HepG2 (cell line): ENCODE measurements at regions of chr20 and their contacts with region 1.

Region 1: DNA sequence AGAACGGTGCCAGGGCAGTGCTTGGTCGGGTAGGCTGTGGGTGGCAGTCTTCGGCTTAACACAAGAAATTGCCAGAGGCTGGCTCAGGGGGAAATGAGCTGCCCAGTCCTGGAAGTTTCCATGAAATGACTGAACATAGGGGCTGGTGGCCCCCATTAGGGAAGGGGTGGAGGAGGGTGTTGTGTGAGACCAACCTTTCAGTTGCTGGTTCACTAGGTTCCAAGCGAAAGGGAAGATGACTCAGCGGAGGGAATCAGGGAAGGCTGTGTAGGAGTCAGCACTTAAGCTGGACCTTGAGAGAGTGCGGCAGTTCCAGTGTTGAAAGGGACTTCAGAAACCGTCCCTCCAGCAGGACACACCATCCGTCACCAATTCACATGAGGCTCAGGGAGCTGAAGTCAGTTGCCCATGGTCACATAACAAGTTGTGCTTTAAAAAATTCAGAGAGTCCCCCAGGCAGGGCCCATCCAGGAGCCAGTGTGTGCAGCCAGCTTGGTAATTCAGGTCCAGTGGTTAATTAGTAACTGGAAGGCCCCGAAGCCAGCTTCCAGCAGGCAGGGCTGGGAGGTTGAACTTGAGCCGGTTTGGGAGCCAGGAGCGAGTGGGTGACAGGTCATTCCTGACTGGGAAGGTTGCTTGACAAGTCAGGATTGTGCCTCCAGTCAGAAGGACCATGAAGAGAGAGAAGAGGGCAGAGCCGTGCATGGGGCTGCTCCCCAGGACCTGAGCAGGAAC is at the start of gene SGK2:
- DNase-seq: peak; percentile 96
- ATAC-seq: peak; percentile 85
- H3K4me3 ChIP-seq: peak within 1 kb of the TSS; percentile 68 to 85 (median 84)
- H3K27ac ChIP-seq: peak within 1 kb of the TSS; percentile 99
- H3K4me1 ChIP-seq: peaks cover 62% of the 10 kb centered on the region
- H3K27me3 ChIP-seq: no peaks in the 10 kb centered on the region; a peak in 1 of 5 replicates
- CTCF ChIP-seq: peak; percentile 30; the same call in 1 of the 2 replicates
- EP300 ChIP-seq: peak; percentile 44 to 57; a peak in 2 of 4 replicates
- POLR2A ChIP-seq: peak; percentile 87 to 97
- RAD21 ChIP-seq: peak; percentile 23; the same call in 1 of the 2 replicates
- total RNA-seq, gene SGK2: 29.4 and 34.3 TPM in 2 replicates

Region 2: GRCh38 chr20:43492101-43492500 is 66.5 kb before region 1 on chr20:
- CTCF ChIA-PET with region 1: no interaction called
- POLR2A ChIA-PET with region 1: no interaction called
- in situ Hi-C with region 1: no loop called
- intact Hi-C with region 1: no loop called
- DNase-seq: no peak
- ATAC-seq: no peak
- H3K4me3 ChIP-seq: no peak overlapping the region
- H3K27ac ChIP-seq: no peak overlapping the region
- H3K4me1 ChIP-seq: peaks cover 6% of the 10 kb centered on the region; the same call in 1 of the 2 replicates
- H3K27me3 ChIP-seq: no peaks in the 10 kb centered on the region
- CTCF ChIP-seq: no peak
- EP300 ChIP-seq: no peak
- POLR2A ChIP-seq: no peak
- RAD21 ChIP-seq: no peak

Region 3: GRCh38 chr20:43514062-43514999 is 44.2 kb before region 1 on chr20:
- CTCF ChIA-PET with region 1: no interaction called
- POLR2A ChIA-PET with region 1: interaction called, 36 read pairs
- in situ Hi-C with region 1: no loop called
- intact Hi-C with region 1: no loop called
- DNase-seq: peak; percentile 100
- ATAC-seq: peak; percentile 87
- H3K4me3 ChIP-seq: peak overlapping the region; percentile 62 to 84 (median 81)
- H3K27ac ChIP-seq: peak overlapping the region; percentile 16
- H3K4me1 ChIP-seq: peaks cover 26% of the 10 kb centered on the region
- H3K27me3 ChIP-seq: no peaks in the 10 kb centered on the region
- CTCF ChIP-seq: peak; percentile 80
- EP300 ChIP-seq: no peak
- POLR2A ChIP-seq: peak; percentile 65 to 89
- RAD21 ChIP-seq: peak; percentile 69

Region 4: GRCh38 chr20:43537921-43538877 is 20.4 kb before region 1 on chr20:
- CTCF ChIA-PET with region 1: no interaction called
- POLR2A ChIA-PET with region 1: interaction called, 224 read pairs
- in situ Hi-C with region 1: no loop called
- intact Hi-C with region 1: loop called (anchors 1 kb)
- DNase-seq: peak; percentile 74
- ATAC-seq: peak; percentile 67
- H3K4me3 ChIP-seq: no peak overlapping the region
- H3K27ac ChIP-seq: no peak overlapping the region
- H3K4me1 ChIP-seq: peaks cover 45% of the 10 kb centered on the region
- H3K27me3 ChIP-seq: no peaks in the 10 kb centered on the region; a peak in 1 of 5 replicates
- CTCF ChIP-seq: peak; percentile 99
- EP300 ChIP-seq: no peak
- POLR2A ChIP-seq: no peak
- RAD21 ChIP-seq: peak; percentile 97

Region 5: GRCh38 chr20:43583982-43584432 is 25.4 kb after region 1 on chr20:
- CTCF ChIA-PET with region 1: no interaction called
- POLR2A ChIA-PET with region 1: interaction called, 182 read pairs
- in situ Hi-C with region 1: no loop called
- intact Hi-C with region 1: no loop called
- DNase-seq: peak; percentile 95
- ATAC-seq: peak; percentile 83
- H3K4me3 ChIP-seq: no peak overlapping the region
- H3K27ac ChIP-seq: peak overlapping the region; percentile 46
- H3K4me1 ChIP-seq: peaks cover 36% of the 10 kb centered on the region
- H3K27me3 ChIP-seq: no peaks in the 10 kb centered on the region
- CTCF ChIP-seq: 0 out of 2 replicates have a peak, but pooled peaks have one; percentile 5
- EP300 ChIP-seq: peak; percentile 52 to 62; a peak in 3 of 4 replicates
- POLR2A ChIP-seq: no peak
- RAD21 ChIP-seq: no peak

Region 6: GRCh38 chr20:43666376-43667328 is 108.1 kb after region 1 on chr20 and contains the start of gene MYBL2:
- CTCF ChIA-PET with region 1: no interaction called
- POLR2A ChIA-PET with region 1: interaction called, 22 read pairs
- in situ Hi-C with region 1: no loop called
- intact Hi-C with region 1: no loop called
- DNase-seq: peak; percentile 70
- ATAC-seq: peak; percentile 92
- H3K4me3 ChIP-seq: peak within 1 kb of the TSS; percentile 63 to 86 (median 70)
- H3K27ac ChIP-seq: no peak within 1 kb of the TSS
- H3K4me1 ChIP-seq: peaks cover 54% of the 10 kb centered on the region
- H3K27me3 ChIP-seq: no peaks in the 10 kb centered on the region; a peak in 1 of 5 replicates
- CTCF ChIP-seq: no peak
- EP300 ChIP-seq: no peak
- POLR2A ChIP-seq: peak; percentile 74 to 84
- RAD21 ChIP-seq: no peak
- total RNA-seq, gene MYBL2: 66.2 and 76.9 TPM in 2 replicates